Endothelial cell of umbilical vein (primary cell): ENCODE measurements at regions of chr10 and their contacts with region 1.

Region 1: GRCh38 chr10:15898046-15898445 is 37.7 kb upstream of the MINDY3 start:
- DNase-seq: peak; percentile 18
- H3K4me3 ChIP-seq: no peak overlapping the region
- H3K27ac ChIP-seq: no peak overlapping the region
- H3K4me1 ChIP-seq: peaks cover 12% of the 10 kb centered on the region
- H3K27me3 ChIP-seq: peaks cover 1 to 16% of the 10 kb centered on the region in 2 experiments
- CTCF ChIP-seq: peak; percentile 15 to 20
- POLR2A ChIP-seq: no peak

Region 2: GRCh38 chr10:15661574-15661973 is 236.5 kb before region 1 on chr10:
- CTCF ChIA-PET with region 1: no interaction called
- POLR2A ChIA-PET with region 1: no interaction called
- dilution Hi-C with region 1: no loop called
- intact Hi-C with region 1: no loop called
- DNase-seq: no peak
- H3K4me3 ChIP-seq: no peak overlapping the region
- H3K27ac ChIP-seq: no peak overlapping the region
- H3K4me1 ChIP-seq: no peaks in the 10 kb centered on the region
- H3K27me3 ChIP-seq: no peaks in the 10 kb centered on the region
- CTCF ChIP-seq: no peak
- POLR2A ChIP-seq: no peak

Region 3: DNA sequence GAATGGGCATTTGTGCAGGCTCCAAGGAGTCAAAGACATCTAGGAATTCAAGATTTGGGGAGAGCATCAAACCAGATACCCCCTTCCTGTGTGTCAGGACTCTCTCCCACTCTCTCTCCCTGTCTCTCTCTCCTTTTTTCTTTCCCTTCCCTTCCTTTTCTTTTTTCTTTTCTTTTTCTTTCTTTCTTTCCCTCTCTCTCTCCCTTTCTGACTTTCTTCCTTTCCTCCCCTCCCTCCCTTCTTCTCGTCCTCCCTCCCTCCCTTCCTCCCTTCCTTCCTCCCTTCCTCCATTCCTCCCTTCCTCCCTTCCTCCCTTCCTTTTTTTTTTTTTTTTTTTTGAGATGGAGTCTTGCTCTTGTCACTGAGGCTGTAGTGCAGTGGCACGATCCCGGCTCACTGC is 13.6 kb before region 1 on chr10:
- CTCF ChIA-PET with region 1: interaction called, 25 read pairs
- POLR2A ChIA-PET with region 1: no interaction called
- dilution Hi-C with region 1: no loop called
- intact Hi-C with region 1: no loop called
- DNase-seq: no peak
- H3K4me3 ChIP-seq: no peak overlapping the region
- H3K27ac ChIP-seq: no peak overlapping the region
- H3K4me1 ChIP-seq: no peaks in the 10 kb centered on the region
- H3K27me3 ChIP-seq: peaks cover 18 to 29% of the 10 kb centered on the region in 2 experiments
- CTCF ChIP-seq: no peak
- POLR2A ChIP-seq: no peak

Region 4: GRCh38 chr10:16545116-16545736 is 647.2 kb after region 1 on chr10:
- CTCF ChIA-PET with region 1: interaction called, 44 read pairs
- POLR2A ChIA-PET with region 1: no interaction called
- dilution Hi-C with region 1: no loop called
- intact Hi-C with region 1: loop called (anchors 1 kb)
- DNase-seq: peak; percentile 43
- H3K4me3 ChIP-seq: no peak overlapping the region
- H3K27ac ChIP-seq: no peak overlapping the region
- H3K4me1 ChIP-seq: no peaks in the 10 kb centered on the region
- H3K27me3 ChIP-seq: peaks cover 0 to 1% of the 10 kb centered on the region in 2 experiments
- CTCF ChIP-seq: peak; percentile 63 to 67
- POLR2A ChIP-seq: no peak

Region 5: GRCh38 chr10:16809074-16809718 is 911.1 kb after region 1 on chr10:
- CTCF ChIA-PET with region 1: interaction called, 94 read pairs
- POLR2A ChIA-PET with region 1: no interaction called
- dilution Hi-C with region 1: no loop called
- intact Hi-C with region 1: loop called (anchors 1 kb)
- DNase-seq: peak; percentile 64
- H3K4me3 ChIP-seq: no peak overlapping the region
- H3K27ac ChIP-seq: no peak overlapping the region
- H3K4me1 ChIP-seq: peaks cover 2% of the 10 kb centered on the region
- H3K27me3 ChIP-seq: no peaks in the 10 kb centered on the region
- CTCF ChIP-seq: peak; percentile 70 to 73
- POLR2A ChIP-seq: no peak

Region 6: GRCh38 chr10:16915300-16915699 is 1017.3 kb after region 1 on chr10:
- CTCF ChIA-PET with region 1: no interaction called
- POLR2A ChIA-PET with region 1: no interaction called
- dilution Hi-C with region 1: no loop called
- intact Hi-C with region 1: no loop called
- DNase-seq: peak; percentile 8
- H3K4me3 ChIP-seq: no peak overlapping the region
- H3K27ac ChIP-seq: no peak overlapping the region
- H3K4me1 ChIP-seq: peaks cover 19% of the 10 kb centered on the region
- H3K27me3 ChIP-seq: no peaks in the 10 kb centered on the region
- CTCF ChIP-seq: no peak
- POLR2A ChIP-seq: no peak

Region 7: DNA sequence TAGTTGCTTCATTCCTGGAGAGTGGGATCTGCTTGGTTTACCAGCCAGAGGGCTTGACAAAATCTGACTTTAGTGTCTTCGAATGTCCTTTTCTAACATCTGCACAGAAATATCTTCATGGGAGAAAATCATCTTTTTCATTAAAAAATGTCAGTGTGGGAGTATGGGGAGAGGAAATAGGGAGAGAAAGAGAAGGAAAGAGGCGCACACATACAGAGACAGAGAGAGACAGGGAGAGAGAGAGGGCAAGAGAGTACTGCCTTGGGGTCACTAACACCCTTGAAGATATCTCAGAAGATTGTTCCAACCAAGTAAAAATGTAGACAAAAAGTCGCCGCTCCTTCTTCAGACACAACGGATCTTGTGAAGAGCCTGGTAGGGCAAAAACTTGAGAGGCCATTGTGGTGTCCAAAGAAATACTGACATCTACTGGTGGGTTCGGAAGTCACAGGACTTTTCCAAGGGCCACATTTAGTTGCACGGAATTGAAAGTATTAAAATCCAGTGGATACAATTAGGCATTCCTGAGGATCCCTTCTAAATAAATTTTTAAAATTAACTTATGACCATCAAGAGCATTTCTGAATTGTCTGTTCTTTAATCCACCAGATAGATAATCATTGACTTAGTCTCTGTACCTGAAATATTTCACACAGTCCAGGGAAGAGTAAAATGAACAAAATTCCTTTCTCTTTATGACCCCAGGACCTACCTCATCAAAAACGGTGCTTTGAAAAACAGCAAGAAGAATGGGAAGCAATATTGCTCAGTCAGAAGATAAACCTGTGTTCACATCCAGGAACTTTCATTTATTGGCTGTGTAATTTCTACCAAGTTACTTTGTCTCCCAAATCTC is 1359.6 kb after region 1 on chr10:
- CTCF ChIA-PET with region 1: interaction called, 3 read pairs
- POLR2A ChIA-PET with region 1: no interaction called
- dilution Hi-C with region 1: no loop called
- intact Hi-C with region 1: loop called (anchors 10 kb)
- DNase-seq: peak; percentile 80
- H3K4me3 ChIP-seq: peak overlapping the region in 1 of 3 experiments; percentile 13
- H3K27ac ChIP-seq: peak overlapping the region; percentile 33
- H3K4me1 ChIP-seq: peaks cover 4% of the 10 kb centered on the region
- H3K27me3 ChIP-seq: no peaks in the 10 kb centered on the region
- CTCF ChIP-seq: peak; percentile 64 to 73
- POLR2A ChIP-seq: no peak